B cell (primary cell): ENCODE measurements at regions of chr7 and their contacts with region 1.

Region 1: DNA sequence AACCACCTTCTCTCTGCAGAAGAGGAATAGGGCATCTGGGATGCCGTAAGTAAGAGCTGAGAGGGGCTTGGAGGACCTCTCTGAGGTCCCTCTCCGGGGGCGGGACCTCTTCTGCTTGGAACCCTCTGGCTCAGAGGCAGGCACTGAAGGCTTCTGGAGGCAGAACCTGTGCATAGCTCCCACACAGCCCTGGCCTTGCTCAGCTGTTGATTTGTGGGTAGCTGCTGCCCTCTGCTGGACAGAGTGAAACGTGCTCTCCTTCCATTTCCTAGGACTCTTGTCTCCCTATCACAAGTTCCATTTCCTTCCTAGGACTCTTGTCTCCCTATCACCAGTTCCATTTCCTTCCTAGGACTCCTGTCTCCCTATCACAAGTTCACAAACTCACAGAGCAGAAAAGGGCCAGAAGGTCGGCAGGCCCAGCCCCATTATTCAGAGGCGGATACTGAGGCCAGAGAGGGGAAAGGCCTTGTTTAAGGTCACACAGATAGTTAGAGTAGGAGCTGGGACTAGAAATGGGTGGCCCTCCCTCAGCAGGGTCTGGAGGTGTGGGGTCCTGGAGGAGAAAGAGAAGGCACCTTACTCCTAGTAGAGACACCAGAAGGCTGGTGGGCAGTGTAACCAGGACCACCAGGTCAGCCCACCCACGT is 30.3 kb upstream of the GARS1 start:
- DNase-seq: peak; percentile 80
- ATAC-seq: peak; percentile 93
- H3K4me3 ChIP-seq: no peak overlapping the region
- H3K4me3 Mint-ChIP-seq: no peak overlapping the region
- H3K27ac ChIP-seq: no peak overlapping the region
- H3K27ac Mint-ChIP-seq: no peak overlapping the region
- H3K4me1 ChIP-seq: no peaks in the 10 kb centered on the region
- H3K4me1 Mint-ChIP-seq: no peaks in the 10 kb centered on the region
- H3K27me3 ChIP-seq: no peaks in the 10 kb centered on the region
- H3K27me3 Mint-ChIP-seq: no peaks in the 10 kb centered on the region
- CTCF ChIP-seq: peak; percentile 92

Region 2: DNA sequence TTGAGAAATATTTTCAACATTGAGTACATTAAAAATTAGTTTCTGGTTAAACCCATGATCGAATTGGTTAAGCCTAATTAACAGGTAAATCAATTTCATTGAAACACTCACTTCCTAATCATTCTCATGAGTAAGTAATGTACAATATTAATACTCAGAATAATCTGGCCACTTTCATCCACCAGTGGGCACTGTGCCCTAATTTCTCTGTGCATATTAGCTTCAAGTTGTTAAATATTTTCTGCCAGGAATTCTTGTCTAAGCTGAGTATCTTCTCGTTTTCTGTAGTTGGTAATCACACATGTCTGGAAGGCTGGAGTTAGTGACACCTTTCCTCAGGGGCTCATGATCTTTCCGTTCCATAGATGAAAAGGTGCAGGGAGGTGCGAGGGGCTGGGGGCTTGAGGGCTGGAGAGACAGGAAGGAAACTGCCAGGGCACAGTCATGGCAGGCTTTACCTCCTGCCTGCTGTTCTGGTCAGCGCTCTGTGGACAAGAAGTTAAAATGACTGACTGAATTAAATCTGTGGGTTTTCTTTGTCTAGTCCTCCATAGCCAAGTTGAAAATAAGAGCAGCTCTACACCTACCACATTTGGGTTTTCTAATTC is 686.2 kb before region 1 on chr7:
- CTCF ChIA-PET with region 1: interaction called, 23 read pairs
- POLR2A ChIA-PET with region 1: no interaction called
- intact Hi-C with region 1: no loop called
- DNase-seq: peak; percentile 59
- ATAC-seq: no peak
- H3K4me3 ChIP-seq: no peak overlapping the region
- H3K4me3 Mint-ChIP-seq: no peak overlapping the region
- H3K27ac ChIP-seq: no peak overlapping the region
- H3K27ac Mint-ChIP-seq: no peak overlapping the region
- H3K4me1 ChIP-seq: peaks cover 0 to under 1% of the 10 kb centered on the region in 2 donors
- H3K4me1 Mint-ChIP-seq: peaks cover 3% of the 10 kb centered on the region
- H3K27me3 ChIP-seq: peaks cover 0 to 3% (median 1%) of the 10 kb centered on the region in 4 experiments
- H3K27me3 Mint-ChIP-seq: peaks cover 25% of the 10 kb centered on the region
- CTCF ChIP-seq: peak; percentile 77

Region 3: DNA sequence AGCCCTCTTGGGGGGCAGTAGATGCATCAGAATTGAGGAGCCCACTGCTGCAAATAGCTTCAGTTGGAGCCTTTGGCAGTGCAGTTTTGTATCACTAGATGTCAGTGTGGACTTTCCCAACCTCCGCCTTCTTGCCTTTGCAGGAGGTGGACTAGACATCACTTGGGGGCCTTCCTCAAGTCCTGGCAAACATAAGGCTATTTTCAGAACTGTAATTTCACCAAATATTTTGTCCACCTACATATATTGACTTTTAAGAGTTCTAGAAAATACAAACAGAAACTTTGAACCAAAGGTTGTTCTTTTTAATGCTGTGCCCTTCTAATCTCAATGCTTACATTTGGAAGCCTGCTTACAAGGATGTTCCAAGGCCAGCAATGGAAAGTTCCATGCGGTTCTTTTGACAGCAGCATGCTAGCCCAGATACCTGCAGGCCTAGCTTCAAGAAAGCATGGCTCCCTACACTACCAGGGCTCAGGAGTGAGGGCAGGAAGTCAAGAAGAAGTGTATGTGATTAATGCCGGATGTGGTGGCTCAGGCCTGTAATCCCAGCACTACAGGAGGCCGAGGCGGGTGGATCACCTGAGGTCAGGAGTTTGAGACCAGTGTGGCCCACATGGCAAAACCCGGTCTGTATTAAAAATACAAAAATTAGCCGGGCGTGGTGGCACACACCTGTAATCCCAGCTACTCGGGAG is 288.0 kb before region 1 on chr7:
- CTCF ChIA-PET with region 1: interaction called, 82 read pairs
- POLR2A ChIA-PET with region 1: no interaction called
- intact Hi-C with region 1: loop called (anchors 1 kb)
- DNase-seq: peak; percentile 66
- ATAC-seq: peak; percentile 72
- H3K4me3 ChIP-seq: no peak overlapping the region
- H3K4me3 Mint-ChIP-seq: no peak overlapping the region
- H3K27ac ChIP-seq: no peak overlapping the region
- H3K27ac Mint-ChIP-seq: no peak overlapping the region
- H3K4me1 ChIP-seq: peaks cover 8 to 9% of the 10 kb centered on the region in 2 donors
- H3K4me1 Mint-ChIP-seq: peaks cover 16% of the 10 kb centered on the region
- H3K27me3 ChIP-seq: no peaks in the 10 kb centered on the region
- H3K27me3 Mint-ChIP-seq: no peaks in the 10 kb centered on the region
- CTCF ChIP-seq: peak; percentile 70

Region 4: DNA sequence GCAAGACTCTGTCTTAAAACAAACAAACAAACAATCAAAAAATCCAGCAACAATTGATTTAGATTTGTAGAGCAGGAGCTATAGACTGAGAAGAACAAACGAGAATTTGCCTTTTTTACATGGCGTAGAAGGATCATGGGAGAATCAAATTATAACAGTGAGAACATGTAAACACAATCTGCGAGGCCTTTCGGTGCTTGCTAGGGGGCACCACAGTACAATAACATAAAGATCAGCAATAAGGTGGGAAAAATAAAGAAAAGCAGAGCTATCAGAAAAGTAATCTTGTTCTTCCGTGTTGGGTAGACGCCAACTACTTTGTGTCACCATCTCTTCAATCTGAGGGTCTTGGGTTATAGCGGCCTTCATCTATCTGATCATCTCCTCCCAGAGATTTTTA is 168.0 kb before region 1 on chr7:
- CTCF ChIA-PET with region 1: interaction called, 29 read pairs
- POLR2A ChIA-PET with region 1: interaction called, 3 read pairs
- intact Hi-C with region 1: no loop called
- DNase-seq: peak; percentile 24
- ATAC-seq: no peak
- H3K4me3 ChIP-seq: no peak overlapping the region
- H3K4me3 Mint-ChIP-seq: no peak overlapping the region
- H3K27ac ChIP-seq: no peak overlapping the region
- H3K27ac Mint-ChIP-seq: no peak overlapping the region
- H3K4me1 ChIP-seq: peaks cover 0 to 2% of the 10 kb centered on the region in 2 donors
- H3K4me1 Mint-ChIP-seq: peaks cover 4% of the 10 kb centered on the region
- H3K27me3 ChIP-seq: no peaks in the 10 kb centered on the region
- H3K27me3 Mint-ChIP-seq: no peaks in the 10 kb centered on the region
- CTCF ChIP-seq: no peak

Region 5: DNA sequence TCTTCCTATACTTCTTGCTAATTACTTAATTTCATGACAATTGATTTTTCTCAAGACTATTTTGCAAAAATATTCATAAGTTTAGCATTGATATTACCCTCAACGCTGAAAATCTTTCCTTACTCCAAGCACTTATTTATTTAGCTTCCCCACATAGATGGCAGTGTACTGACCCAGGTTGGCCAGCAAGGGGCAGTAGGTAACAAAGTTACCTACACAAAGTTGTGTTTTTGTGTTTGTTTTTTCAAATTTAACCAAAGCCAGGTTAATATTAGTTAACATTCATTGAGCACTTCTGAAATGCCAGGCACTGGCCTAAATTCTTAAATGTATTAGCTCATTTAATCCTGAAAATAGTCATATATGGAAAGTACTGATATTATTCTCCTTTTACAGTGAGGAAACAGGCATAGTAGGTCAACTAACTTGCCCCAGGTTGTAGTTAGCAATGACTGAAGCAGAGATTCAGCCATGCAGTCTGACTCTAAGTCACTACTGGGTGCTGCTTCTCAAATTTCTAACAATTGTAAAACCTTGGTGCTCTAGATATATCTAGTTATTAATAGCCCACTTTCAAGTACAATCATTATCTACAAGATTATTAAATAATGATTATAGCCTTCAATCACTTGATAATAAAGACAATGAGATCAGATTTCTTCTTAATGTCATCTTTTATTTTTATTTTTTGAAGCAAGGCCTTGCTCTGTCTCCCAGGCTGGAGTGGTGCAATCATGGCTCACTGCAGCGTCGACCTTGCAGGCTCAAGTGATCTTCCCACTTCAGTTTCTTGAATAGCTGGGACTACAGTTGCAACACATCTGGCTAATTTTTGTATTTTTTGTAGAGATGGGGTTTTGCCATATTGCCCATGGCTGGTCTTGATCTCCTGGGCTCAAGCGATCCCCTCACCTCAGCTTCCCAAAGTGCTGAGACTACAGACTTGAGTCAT is 54.0 kb before region 1 on chr7:
- CTCF ChIA-PET with region 1: interaction called, 37 read pairs
- POLR2A ChIA-PET with region 1: no interaction called
- intact Hi-C with region 1: loop called (anchors 1 kb)
- DNase-seq: peak; percentile 47
- ATAC-seq: peak; percentile 43
- H3K4me3 ChIP-seq: no peak overlapping the region
- H3K4me3 Mint-ChIP-seq: no peak overlapping the region
- H3K27ac ChIP-seq: no peak overlapping the region
- H3K27ac Mint-ChIP-seq: no peak overlapping the region
- H3K4me1 ChIP-seq: peaks cover 1 to 2% of the 10 kb centered on the region in 2 donors
- H3K4me1 Mint-ChIP-seq: peaks cover 3% of the 10 kb centered on the region
- H3K27me3 ChIP-seq: no peaks in the 10 kb centered on the region
- H3K27me3 Mint-ChIP-seq: no peaks in the 10 kb centered on the region
- CTCF ChIP-seq: peak; percentile 91

Region 6: DNA sequence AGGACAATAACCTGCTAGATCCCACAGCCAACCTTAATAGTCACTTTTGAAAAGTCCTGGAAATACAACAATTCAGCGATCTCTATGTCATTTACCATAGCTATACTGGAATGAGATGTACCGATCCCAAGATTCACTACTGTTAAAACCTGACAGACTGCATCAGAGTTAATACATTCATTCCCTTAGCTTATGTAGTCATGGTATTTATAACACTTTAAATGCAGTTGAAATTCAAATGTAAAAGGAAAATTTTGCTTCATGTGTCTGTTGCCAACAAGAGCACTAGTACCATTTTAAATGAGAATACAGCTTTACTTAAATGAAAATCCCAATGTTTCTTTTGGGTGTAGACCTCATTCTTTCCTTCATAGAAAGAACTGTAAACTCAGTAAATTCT is 48.6 kb before region 1 on chr7:
- CTCF ChIA-PET with region 1: interaction called, 37 read pairs
- POLR2A ChIA-PET with region 1: no interaction called
- intact Hi-C with region 1: loop called (anchors 1 kb)
- DNase-seq: no peak
- ATAC-seq: no peak
- H3K4me3 ChIP-seq: no peak overlapping the region
- H3K4me3 Mint-ChIP-seq: no peak overlapping the region
- H3K27ac ChIP-seq: no peak overlapping the region
- H3K27ac Mint-ChIP-seq: no peak overlapping the region
- H3K4me1 ChIP-seq: peaks cover 5 to 6% of the 10 kb centered on the region in 2 donors
- H3K4me1 Mint-ChIP-seq: peaks cover 5% of the 10 kb centered on the region
- H3K27me3 ChIP-seq: no peaks in the 10 kb centered on the region
- H3K27me3 Mint-ChIP-seq: no peaks in the 10 kb centered on the region
- CTCF ChIP-seq: no peak

Region 7: DNA sequence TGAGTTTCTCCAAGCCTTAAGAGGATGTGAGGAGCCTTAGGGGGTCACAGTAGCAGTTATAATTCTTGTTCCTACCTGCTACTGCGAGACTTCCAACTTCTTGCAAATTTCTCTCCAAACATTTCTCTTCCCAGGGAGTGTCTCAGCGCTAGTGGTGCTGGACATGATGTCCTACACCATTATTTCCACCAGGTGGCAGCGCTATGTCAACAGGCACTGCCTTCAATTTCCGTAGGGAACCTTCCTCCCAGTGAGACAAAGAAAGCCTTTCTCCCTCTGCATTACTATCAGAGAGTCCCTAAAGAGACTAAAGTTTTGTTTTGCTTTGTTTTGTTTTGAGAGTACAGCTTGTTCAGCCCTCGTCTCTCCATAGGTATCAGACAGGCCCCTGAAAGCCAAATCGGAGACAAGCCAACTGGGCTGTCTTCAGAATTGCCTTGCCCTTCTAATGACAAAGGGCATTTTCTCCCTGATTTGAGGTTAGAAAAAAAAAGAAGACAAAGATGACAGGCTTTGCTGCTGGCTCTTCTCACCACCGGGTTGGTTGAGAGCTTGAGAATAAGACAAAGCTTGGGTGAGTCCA is 15.5 kb before region 1 on chr7:
- CTCF ChIA-PET with region 1: interaction called, 30 read pairs
- POLR2A ChIA-PET with region 1: no interaction called
- intact Hi-C with region 1: loop called (anchors 1 kb)
- DNase-seq: peak; percentile 40
- ATAC-seq: peak; percentile 45
- H3K4me3 ChIP-seq: no peak overlapping the region
- H3K4me3 Mint-ChIP-seq: no peak overlapping the region
- H3K27ac ChIP-seq: no peak overlapping the region
- H3K27ac Mint-ChIP-seq: no peak overlapping the region
- H3K4me1 ChIP-seq: peaks cover 3 to 4% of the 10 kb centered on the region in 2 donors
- H3K4me1 Mint-ChIP-seq: peaks cover 5% of the 10 kb centered on the region
- H3K27me3 ChIP-seq: no peaks in the 10 kb centered on the region
- H3K27me3 Mint-ChIP-seq: no peaks in the 10 kb centered on the region
- CTCF ChIP-seq: peak; percentile 88